MCF 10A (cell line): ENCODE measurements at regions of chr17 and their contacts with region 1.

Region 1: DNA sequence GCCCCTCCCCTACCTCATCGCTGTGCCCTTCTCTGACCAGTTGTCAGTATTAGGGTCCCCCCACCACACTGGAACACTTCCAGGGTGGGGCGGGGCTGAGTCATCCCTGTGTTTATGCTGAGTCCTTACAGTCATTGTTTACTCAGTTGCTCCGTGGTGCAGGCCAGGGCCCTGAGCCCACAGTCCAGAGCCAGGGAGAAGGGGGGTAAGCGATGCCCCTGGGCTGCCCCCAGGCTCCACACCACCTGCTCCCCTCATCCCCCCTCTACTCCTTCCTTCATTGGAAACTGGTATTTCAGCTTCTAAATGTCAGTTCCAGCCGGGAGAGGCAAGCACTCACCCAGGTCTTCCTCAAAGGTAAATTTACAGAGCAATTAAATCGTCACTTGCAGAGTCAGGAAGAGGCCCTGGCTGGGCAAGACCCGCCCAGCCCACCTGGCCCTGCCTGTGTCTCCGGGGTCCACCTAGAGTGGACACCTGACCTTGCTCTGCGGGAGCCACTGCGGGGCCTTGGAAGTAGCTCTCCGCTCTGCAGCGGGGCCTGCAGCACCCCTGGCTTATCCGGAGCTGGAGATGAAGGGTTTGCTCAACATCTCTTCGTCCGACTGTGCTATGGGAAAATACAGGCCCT is 4.8 kb downstream of the ATP2A3 start:
- DNase-seq: peak; percentile 40
- H3K4me3 Mint-ChIP-seq: no peak overlapping the region
- H3K27ac Mint-ChIP-seq: no peak overlapping the region
- H3K4me1 Mint-ChIP-seq: peaks cover 6% of the 10 kb centered on the region
- H3K27me3 Mint-ChIP-seq: peaks cover 12% of the 10 kb centered on the region
- CTCF ChIP-seq: no peak

Region 2: DNA sequence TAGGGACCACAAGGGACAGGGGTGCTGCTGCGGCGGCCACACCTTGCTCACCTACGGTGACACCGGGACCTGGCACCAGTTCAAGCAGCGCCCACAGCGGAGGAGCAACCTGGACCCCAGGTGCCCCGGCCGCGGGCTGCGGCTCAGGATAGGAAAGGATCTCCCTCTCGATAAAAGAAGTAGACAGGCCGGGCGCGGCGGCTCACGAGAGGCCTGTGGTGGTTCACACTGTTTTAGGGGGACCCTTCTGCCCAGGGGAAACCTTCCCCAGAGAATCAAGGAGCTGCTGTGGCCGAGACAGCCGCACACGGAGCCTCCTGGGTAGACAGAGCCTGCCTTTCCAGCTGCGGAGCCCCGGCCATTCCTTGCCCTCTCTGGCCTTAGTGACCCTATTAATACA is 22.7 kb after region 1 on chr17:
- CTCF ChIA-PET with region 1: no interaction called
- POLR2A ChIA-PET with region 1: no interaction called
- intact Hi-C with region 1: loop called (anchors 1 kb)
- DNase-seq: no peak
- H3K4me3 Mint-ChIP-seq: no peak overlapping the region
- H3K27ac Mint-ChIP-seq: no peak overlapping the region
- H3K4me1 Mint-ChIP-seq: peaks cover 1% of the 10 kb centered on the region
- H3K27me3 Mint-ChIP-seq: no peaks in the 10 kb centered on the region
- CTCF ChIP-seq: no peak